ENCODE measurements at regions of chr5 and their contacts with region 1.

Region 1: GRCh38 chr5:145681686-145682085 is 153.5 kb downstream of the PRELID2 start:
- DNase-seq: peak; percentile 25

Region 2: DNA sequence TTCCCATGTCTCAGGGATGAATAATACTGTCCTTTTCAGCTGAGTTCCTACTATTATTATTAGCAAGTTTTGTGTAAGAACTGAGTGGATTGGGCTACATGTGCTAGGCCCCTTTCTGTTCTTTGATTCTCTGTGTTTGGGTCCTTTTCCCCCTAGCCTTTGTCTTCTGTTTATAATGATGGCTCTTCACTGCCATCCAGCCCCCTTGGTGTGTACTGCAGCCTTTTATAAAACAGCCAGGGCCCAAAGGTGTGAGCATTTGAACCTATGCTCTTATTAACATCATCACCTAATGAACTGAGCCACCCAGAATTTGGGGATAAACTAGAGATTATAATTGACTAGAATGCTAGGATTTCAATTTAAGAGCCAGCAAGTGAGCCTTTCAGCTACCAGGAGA is 371.1 kb after region 1 on chr5:
- in situ Hi-C with region 1: loop called (anchors 25 kb)
- DNase-seq: no peak

Measured in G401 (cell line).